Activated T-helper 1 cell treated with anti-CD3 and anti-CD28 coated beads, Interleukin-12 subunit alpha, Interleukin-12 subunit beta, Interleukin-2, Interleukin-4 antibody, amounts not matched to agents 30 ng/mL and 10 ng/mL and 1 ng/mL, durations not matched to agents 14 hours and 24 hours and 36 hours (primary cell): ENCODE measurements at regions of chr5 and their contacts with region 1.

Region 1: DNA sequence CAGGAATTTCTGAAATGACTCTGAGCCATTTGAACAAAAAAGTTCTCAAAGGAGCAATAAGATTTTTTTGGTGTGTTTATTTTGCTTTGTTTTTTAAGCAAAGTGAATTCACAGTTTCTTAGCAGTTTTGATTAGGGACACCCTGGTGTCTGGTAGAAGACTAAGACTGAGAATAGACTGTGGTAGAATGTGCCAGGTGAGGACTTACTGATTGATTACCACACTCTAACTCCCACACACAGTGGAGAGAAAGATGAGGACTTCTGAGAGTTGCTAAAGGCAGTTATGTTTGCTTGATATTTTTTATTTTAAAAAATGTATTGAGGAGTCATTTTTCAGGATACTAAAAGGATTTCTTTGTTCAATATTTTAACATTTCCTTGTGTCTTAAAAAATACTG is 175.1 kb downstream of the CD180 start:
- DNase-seq: no peak
- H3K4me3 Mint-ChIP-seq: no peak overlapping the region
- H3K27ac Mint-ChIP-seq: peak overlapping the region; percentile 12
- H3K4me1 Mint-ChIP-seq: peaks cover 32% of the 10 kb centered on the region
- H3K27me3 Mint-ChIP-seq: no peaks in the 10 kb centered on the region

Region 2: GRCh38 chr5:66904189-66904588 is 117.3 kb before region 1 on chr5:
- intact Hi-C with region 1: no loop called
- DNase-seq: no peak
- H3K4me3 Mint-ChIP-seq: no peak overlapping the region
- H3K27ac Mint-ChIP-seq: no peak overlapping the region
- H3K4me1 Mint-ChIP-seq: peaks cover 8% of the 10 kb centered on the region
- H3K27me3 Mint-ChIP-seq: no peaks in the 10 kb centered on the region

Region 3: DNA sequence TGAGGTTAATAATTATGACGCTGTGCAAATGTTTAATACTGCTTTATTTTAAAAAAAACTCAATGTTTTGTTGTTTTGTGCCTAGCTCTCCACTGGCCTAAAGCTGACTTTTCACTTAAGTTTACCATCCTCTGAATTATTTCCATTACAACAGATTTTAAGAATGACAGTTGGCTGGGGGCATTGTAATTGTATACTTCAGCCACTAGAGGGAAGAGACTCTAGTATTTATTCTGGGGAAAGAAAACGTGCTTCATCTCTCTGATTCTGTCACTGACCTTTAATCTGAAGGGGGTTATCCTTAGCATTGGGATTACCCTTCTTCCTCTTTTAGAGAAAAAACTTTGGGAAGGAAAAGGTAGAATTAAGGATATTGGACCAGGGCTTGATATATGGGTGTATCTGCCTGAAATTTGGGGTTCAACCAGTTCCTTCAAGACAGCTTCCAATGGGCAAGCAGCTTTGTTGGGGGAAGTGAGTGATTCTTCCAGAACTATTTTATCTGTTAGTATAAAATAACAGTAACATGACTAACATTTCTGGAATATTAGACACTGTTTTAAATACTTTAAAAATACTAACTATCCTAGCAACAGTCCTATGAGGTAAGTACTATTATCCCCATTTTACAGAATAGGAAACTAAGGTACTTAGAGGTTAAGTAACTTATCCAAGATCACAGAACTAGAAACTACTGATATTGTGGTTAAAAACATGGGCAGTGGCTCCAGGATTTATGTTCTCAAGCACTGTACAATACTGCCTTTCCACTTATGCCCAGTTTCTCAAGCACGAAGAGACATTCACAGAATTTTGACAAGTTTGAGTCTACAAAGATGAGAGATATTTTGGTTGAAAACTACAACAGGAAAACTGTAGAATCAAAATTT is 33.3 kb before region 1 on chr5:
- intact Hi-C with region 1: loop called (anchors 1 kb)
- DNase-seq: no peak
- H3K4me3 Mint-ChIP-seq: no peak overlapping the region
- H3K27ac Mint-ChIP-seq: no peak overlapping the region
- H3K4me1 Mint-ChIP-seq: peaks cover 31% of the 10 kb centered on the region
- H3K27me3 Mint-ChIP-seq: no peaks in the 10 kb centered on the region

Region 4: DNA sequence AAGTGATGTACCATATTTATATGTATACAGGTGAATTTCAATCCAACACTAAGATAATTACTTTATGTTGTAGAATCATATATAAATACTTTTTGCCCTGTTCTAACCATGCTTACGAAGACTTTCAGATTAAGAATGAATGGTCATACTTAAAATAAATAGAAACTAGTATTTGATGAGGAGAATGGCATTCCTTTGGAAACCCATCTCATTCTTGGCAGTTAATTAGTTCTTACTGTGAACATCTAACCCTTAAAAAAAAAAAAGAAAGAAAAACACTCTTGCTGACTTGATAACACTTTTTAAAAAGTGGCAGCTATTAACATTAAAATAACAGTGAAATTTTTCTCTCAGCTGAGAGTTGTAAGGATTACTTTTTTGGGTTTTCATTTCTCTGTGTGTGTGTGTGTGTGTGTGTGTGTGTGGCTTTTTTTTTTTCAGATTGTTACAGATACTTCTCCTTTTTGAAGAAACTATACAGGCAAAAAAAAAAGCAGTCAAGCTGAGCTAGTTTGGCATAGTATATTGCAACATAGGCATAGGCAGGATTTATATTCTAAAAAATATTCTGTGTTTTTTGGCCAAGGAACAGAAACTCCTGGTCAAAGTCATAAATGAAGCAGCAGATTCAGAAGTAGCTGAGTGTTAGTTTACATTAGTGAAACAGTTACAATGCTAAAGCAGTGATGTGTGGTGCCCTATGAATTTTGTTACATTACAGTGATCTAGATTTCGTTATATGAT is 11.6 kb after region 1 on chr5:
- intact Hi-C with region 1: loop called (anchors 1 kb)
- DNase-seq: no peak
- H3K4me3 Mint-ChIP-seq: no peak overlapping the region
- H3K27ac Mint-ChIP-seq: peak overlapping the region; percentile 10
- H3K4me1 Mint-ChIP-seq: peaks cover 76% of the 10 kb centered on the region
- H3K27me3 Mint-ChIP-seq: no peaks in the 10 kb centered on the region

Region 5: GRCh38 chr5:67038817-67039603 is 17.5 kb after region 1 on chr5:
- intact Hi-C with region 1: loop called (anchors 2 kb)
- DNase-seq: no peak
- H3K4me3 Mint-ChIP-seq: no peak overlapping the region
- H3K27ac Mint-ChIP-seq: peak overlapping the region; percentile 64
- H3K4me1 Mint-ChIP-seq: peaks cover 42% of the 10 kb centered on the region
- H3K27me3 Mint-ChIP-seq: no peaks in the 10 kb centered on the region

Region 6: DNA sequence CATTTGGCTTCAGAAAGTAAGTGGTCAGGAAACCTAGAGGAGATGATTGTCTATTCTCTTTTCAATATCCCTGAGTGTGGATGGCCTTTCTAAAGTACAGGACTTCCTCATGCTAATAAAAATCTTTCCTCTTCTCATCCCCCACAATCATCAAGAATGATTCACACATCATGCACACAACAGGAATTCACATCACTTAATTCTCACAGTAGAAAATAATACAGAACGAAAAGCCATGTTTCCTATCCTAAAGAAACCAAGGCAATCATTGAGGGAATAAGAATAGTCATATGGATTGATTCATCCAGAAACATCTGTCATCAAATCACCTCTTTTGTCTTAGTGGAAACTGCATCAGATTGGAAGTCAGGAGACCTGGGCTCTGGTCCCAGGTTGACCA is 990.9 kb after region 1 on chr5:
- intact Hi-C with region 1: no loop called
- DNase-seq: no peak
- H3K4me3 Mint-ChIP-seq: no peak overlapping the region
- H3K27ac Mint-ChIP-seq: no peak overlapping the region
- H3K4me1 Mint-ChIP-seq: no peaks in the 10 kb centered on the region
- H3K27me3 Mint-ChIP-seq: no peaks in the 10 kb centered on the region